ENCODE measurements at regions of chr2 and their contacts with region 1.

Region 1: GRCh38 chr2:54522624-54523281 is 66.6 kb downstream of the SPTBN1 start:
- DNase-seq: peak; percentile 89 to 90
- H3K4me3 ChIP-seq: no peak overlapping the region
- H3K27ac ChIP-seq: peak overlapping the region in 2 of 3 donors; percentile 84 to 88
- H3K4me1 ChIP-seq: peaks cover 33 to 59% of the 10 kb centered on the region in 2 donors
- H3K27me3 ChIP-seq: no peaks in the 10 kb centered on the region
- CTCF ChIP-seq: peak in 4 of 6 experiments; percentile 64 to 87 (median 73)
- POLR2A ChIP-seq: no peak

Region 2: DNA sequence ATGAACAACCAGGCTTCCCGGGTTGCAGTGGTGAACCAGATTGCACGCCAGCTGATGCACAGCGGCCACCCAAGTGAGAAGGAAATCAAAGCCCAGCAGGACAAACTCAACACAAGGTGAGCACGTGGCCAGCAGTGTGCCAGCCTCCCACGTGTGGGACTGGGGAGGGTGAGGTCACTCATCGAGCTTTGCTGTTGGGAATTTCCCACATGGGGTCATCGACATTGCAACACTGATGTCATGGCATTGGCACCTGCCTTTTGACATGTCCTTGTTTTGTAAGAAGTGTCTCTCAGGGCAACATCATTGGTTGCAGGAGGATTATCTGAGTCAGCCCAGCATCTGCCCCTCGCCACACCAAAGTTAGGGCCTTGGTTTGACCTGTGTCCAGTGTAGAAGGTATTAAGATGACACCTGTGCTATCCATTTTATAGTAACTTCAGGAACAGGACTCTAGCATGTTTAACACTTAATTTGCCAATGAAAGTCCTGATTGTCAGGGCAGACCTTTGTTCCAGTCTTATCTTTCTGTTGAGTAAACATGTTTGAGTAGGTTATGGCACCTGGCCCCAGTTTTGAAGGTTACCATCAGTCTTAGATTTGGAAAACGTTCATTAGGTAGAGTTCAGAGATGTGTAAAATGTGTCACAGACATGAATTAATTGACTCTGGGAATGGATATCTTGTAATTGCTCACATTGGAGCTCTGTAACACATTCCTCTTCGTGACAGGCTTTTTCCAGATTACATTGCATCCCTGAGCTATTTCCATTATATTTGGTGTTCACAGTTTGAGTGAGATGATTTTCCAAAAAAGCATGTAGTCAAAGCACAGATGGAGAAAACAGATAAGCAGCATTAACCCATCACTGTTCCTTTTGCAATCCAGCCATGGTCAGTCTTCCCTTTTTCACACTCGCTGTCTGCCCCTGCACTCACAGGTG is 107.4 kb after region 1 on chr2:
- intact Hi-C with region 1: loop called (anchors 10 kb)
- DNase-seq: peak in 1 of 2 donors; percentile 25
- H3K4me3 ChIP-seq: no peak overlapping the region
- H3K27ac ChIP-seq: peak overlapping the region in 1 of 3 donors; percentile 37
- H3K4me1 ChIP-seq: peaks cover 3 to 24% of the 10 kb centered on the region in 2 donors
- H3K27me3 ChIP-seq: no peaks in the 10 kb centered on the region
- CTCF ChIP-seq: no peak
- POLR2A ChIP-seq: no peak

Region 3: GRCh38 chr2:55063713-55064323 is 541.1 kb after region 1 on chr2:
- intact Hi-C with region 1: no loop called
- DNase-seq: no peak
- H3K4me3 ChIP-seq: no peak overlapping the region
- H3K27ac ChIP-seq: no peak overlapping the region
- H3K4me1 ChIP-seq: peaks cover 4 to 5% of the 10 kb centered on the region in 2 donors
- H3K27me3 ChIP-seq: no peaks in the 10 kb centered on the region
- CTCF ChIP-seq: no peak
- POLR2A ChIP-seq: no peak